Posterior cingulate gyrus (tissue), 11 donors: ENCODE measurements at regions of chr21 and their contacts with region 1.

Region 1: DNA sequence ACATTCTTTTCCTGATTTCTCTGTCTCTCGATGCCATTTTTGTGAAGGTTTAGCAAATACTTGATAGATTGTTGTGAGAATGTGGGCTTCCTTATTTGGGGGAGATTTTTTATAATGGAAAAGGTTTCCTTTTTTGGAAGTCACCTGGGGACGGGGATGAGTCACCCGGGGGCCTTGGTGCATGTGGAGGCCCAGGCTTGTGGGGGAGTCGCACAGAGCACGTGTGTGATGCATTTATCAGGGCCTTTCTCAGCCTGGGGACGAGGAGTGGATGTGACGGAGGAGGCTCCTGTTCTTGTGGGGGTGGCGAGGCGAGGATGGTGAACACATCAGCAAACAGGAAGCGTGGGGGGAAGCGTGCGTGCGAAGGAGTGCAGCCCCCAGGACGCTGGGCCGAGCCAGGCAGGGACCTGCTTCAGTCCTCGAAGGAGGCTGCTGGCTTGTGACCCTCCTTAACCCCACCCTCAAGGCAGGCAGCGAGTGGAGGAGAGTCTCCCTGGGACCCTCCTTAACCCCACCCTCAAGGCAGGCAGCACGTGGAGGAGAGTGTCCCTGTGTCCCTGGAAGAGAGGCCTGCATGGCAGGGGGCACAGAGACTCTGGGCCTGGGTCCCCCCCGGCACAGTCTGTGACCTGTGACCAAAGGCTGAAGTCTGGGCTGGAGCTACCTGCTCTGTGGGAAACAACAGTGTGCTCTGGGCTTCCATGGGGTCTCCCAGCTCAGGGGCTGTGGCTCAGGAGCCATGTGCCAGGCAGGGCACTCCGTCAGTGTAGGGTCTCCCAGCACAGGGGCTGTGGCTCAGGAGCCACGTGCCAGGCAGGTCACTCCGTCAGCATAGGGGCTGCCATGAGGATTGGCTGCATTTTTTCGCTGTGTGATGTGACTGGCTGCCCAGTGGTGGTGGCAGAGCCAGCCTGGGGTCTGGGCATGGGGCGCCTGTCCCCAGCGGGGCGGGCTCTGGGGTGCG is 57.2 kb downstream of the AGPAT3 start:
- DNase-seq: peak in 1 of 10 donors; percentile 82

Region 2: GRCh38 chr21:43866260-43866629 is 56.0 kb before region 1 on chr21:
- intact Hi-C with region 1: loop called (anchors 5 kb)
- DNase-seq: peak in 7 of 10 donors; percentile 25 to 68 (median 28)

Region 3: GRCh38 chr21:44024887-44025362 is 102.7 kb after region 1 on chr21:
- intact Hi-C with region 1: no loop called
- DNase-seq: peak in 7 of 10 donors; percentile 27 to 92 (median 43)

Region 4: GRCh38 chr21:44051462-44051941 is 129.2 kb after region 1 on chr21:
- intact Hi-C with region 1: no loop called
- DNase-seq: peak in 6 of 10 donors; percentile 38 to 90 (median 54)